ENCODE measurements at regions of chr1 and their contacts with region 1.

Region 1: DNA sequence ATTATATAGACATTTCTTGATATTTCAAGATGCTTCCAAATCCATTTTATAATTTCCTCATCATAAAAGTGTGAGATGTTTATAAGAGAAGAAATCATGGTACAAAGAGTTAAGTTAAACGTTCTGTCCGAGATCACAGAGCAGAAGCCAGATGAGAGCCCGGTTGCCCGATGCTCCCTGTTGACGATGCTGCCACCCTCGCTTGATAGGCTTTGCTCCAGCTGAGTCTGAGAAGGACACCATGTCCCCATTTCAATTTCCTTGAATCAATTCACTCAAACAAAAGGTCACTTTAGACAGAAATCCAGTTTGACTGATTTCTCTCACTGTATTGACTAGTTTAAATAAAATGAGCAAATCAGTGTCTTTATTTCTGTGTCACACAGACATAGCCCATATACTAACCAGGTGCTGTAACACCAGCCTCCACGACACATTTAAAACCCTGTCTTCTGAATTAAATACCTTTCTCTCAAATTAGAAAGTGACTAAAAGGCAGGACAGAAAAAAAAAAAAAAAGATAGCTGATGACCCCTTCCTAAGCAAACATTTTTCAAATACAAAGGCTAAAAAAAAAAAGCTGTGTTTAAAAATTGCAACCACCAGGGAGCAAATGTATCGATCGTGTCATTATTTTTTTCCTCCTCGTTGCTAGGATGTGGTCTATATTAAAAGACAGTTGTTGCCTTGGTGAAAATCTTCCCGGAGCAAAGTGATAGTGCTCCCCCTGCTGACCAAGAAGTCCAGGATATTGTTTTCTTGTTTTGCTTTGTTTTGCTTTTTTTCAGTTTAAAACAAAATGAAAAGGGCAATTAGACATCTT is 35.2 kb downstream of the DNASE2B start:
- DNase-seq: peak in 3 of 6 donors; percentile 42 to 60 (median 42)
- ATAC-seq: peak; percentile 83 to 96 (median 94)
- H3K4me3 ChIP-seq: peak overlapping the region in 1 of 4 donors; percentile 22
- H3K27ac ChIP-seq: peak overlapping the region in 2 of 4 donors; percentile 29 to 62
- H3K4me1 ChIP-seq: no peaks in the 10 kb centered on the region
- H3K27me3 ChIP-seq: no peaks in the 10 kb centered on the region
- CTCF ChIP-seq: peak; percentile 25 to 71 (median 48)

Region 2: DNA sequence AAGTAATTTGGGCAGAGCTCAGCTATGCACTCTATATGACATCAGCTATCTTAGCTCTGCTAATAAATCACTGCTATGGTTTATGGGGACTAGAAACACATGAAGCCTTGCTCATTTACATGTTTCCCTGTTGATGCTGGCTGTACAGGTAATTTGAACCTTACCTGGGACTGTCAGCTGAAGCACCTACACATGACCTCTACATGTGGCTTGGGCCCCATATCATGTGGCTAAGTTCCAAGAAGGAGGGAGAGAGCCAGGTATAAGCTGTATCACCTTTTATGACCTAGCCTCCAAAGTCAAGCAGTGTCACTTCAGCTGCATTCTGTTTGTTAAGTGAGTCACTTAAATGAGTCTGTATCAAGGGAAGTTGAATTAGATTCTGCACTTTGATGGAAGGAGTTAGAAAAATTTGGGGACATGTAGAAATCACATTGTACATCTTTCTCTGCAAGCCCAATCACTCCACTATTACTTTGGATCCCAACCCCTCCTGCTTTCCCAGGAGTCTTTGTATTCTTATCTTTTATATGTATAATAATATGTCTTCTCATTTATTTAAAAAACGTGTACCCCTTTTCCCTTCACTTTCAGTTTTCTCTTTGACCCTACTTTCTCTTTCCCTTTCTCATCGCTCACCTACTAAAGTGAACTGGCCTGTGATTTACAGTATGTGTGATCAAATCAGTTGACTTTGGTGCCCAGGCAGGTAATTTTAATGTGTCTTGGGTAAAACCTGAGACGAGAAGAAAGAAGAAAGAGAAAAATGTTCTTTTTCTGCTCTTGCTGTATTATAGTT is 342.8 kb before region 1 on chr1:
- intact Hi-C with region 1: no loop called
- DNase-seq: no peak
- ATAC-seq: peak in 1 of 4 donors; percentile 11
- H3K4me3 ChIP-seq: no peak overlapping the region
- H3K27ac ChIP-seq: no peak overlapping the region
- H3K4me1 ChIP-seq: no peaks in the 10 kb centered on the region
- H3K27me3 ChIP-seq: no peaks in the 10 kb centered on the region
- CTCF ChIP-seq: no peak

Region 3: DNA sequence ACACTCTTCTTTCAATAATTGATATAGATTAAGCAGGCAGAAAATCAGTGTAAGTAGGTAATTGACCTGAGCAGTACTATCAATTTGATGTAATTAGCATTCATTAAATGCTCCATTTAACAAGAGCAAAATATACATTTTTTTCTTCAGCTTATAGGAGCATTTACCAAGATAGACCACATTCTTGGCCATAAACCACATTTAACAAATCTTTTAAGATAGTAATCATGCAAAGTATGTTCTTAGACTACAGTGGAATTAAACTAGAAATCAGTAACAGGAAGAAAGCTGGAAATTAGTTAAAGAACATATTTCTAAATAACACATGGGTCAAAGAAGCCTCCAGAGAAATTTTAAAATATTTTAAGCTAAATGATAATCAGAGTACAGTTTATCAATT is 298.1 kb before region 1 on chr1:
- intact Hi-C with region 1: loop called in 1 of 3 experiments (anchors 5 kb)
- DNase-seq: no peak
- ATAC-seq: no peak
- H3K4me3 ChIP-seq: no peak overlapping the region
- H3K27ac ChIP-seq: no peak overlapping the region
- H3K4me1 ChIP-seq: no peaks in the 10 kb centered on the region
- H3K27me3 ChIP-seq: no peaks in the 10 kb centered on the region
- CTCF ChIP-seq: no peak

Region 4: DNA sequence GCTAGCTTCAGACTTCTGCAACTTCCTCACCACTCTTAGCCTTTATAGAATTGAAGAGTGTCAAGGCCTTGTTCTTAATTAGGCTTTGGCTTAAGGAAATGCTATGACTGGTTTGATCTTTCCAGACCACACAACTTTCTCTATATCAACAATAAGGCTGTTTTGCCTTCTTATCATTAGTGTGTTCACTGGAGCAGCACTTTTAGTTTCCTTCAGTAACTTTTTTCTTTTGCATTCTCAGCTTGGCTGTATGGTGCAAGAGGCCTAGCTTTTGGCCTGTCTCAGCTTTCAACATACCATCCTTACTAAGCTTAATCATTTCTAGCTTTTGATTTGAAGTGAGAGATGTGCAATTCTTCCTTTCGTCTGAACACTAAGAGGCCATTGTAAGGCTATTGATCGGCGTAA is 280.8 kb before region 1 on chr1:
- intact Hi-C with region 1: loop called in 1 of 3 experiments (anchors 5 kb)
- DNase-seq: no peak
- ATAC-seq: no peak
- H3K4me3 ChIP-seq: no peak overlapping the region
- H3K27ac ChIP-seq: no peak overlapping the region
- H3K4me1 ChIP-seq: no peaks in the 10 kb centered on the region
- H3K27me3 ChIP-seq: no peaks in the 10 kb centered on the region
- CTCF ChIP-seq: no peak

Region 5: DNA sequence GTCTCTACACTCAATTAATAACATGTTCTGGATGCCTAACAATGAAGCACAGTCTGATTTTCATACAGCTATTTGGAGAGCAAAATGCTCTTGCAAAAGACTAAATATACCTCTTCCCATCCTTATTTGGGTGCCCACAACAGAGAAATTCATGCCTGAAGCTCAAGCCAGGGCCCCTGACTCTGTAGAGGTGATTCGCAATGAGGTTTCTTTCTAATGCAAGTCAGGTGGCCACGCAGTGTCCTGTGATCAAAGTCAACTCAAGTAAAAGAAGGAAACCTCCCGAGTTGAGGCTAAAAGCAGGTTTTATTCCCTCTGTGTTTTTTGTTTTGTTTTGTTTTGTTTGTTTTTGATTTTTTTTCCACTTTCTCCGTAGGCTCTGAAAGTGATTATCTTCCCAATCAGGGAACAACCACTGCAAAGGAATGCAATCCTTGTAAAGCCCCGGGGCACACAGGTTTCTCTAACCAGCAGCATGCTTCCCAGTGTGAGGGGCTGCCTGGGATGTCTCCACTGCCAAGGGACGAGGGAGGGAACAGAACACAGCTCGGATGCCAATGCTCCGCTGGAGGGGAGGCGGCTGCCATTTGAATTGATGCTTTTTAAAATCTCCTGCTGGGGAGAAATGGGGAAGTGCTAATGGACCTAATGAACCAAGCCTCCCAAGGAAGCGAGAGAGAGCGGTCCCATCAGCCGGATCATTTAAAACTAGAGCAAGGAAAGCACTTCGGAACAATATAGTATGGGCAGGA is 330.6 kb after region 1 on chr1:
- intact Hi-C with region 1: no loop called
- DNase-seq: no peak
- ATAC-seq: no peak
- H3K4me3 ChIP-seq: no peak overlapping the region
- H3K27ac ChIP-seq: no peak overlapping the region
- H3K4me1 ChIP-seq: peaks cover 0 to 2% (median 0%) of the 10 kb centered on the region in 3 donors
- H3K27me3 ChIP-seq: no peaks in the 10 kb centered on the region
- CTCF ChIP-seq: no peak

Measured in pancreas (tissue), 10 donors.